ENCODE measurements at regions of chr11 and their contacts with region 1.

Region 1: DNA sequence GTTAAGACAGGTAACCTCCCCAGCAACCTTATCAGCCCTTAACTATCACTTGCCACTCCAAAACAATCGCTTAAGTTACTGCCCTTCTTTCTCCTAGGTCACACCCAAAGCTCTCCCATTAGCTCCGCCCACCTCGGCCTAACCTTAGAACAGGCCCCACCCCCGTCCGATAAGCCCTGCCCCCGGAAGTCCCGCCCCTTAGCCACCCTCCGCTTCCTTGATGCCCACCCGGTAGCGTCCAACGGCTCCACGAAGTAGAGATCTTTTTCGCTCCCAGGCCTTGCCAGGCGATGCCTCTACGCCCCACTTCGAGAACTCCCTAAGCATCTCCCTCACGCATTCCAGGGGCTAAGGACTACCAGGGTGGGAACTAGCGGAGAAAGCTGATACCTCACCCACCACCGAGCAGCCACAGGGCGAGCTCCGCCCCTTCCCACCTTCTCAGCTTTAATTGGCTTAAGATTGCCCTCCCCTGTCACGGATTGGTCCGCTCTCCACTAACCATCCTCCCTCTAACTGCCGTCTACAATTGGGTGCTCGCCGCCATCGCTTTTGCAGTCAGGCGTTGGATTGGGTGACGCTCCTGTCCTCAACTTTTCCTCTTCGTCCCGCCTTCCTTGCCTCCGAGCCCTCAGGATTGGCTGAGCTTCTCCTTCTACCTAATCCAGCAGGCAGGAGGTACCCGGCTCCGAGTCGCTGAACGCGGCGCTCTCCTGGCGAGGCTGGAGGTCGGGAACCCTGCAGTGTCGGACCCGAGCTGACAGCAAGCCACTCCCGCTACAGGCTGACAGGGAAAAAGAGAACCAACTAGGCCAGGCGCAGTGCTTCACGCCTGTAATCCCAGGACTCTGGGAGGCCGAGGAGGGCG is at the start of gene ZBTB3:
- DNase-seq: peak; percentile 99 to 100
- ATAC-seq: peak; percentile 98 to 99
- H3K4me3 ChIP-seq: peak within 1 kb of the TSS; percentile 55
- H3K27ac ChIP-seq: peak within 1 kb of the TSS; percentile 92 to 94
- H3K4me1 ChIP-seq: peaks cover 11% of the 10 kb centered on the region; the same call in 1 of the 3 replicates
- CTCF ChIP-seq: no peak
- EP300 ChIP-seq: no peak
- POLR2A ChIP-seq: peak; percentile 86
- RAD21 ChIP-seq: no peak
- polyA plus RNA-seq, gene ZBTB3: 3.0 and 3.1 TPM in 2 replicates

Region 2: DNA sequence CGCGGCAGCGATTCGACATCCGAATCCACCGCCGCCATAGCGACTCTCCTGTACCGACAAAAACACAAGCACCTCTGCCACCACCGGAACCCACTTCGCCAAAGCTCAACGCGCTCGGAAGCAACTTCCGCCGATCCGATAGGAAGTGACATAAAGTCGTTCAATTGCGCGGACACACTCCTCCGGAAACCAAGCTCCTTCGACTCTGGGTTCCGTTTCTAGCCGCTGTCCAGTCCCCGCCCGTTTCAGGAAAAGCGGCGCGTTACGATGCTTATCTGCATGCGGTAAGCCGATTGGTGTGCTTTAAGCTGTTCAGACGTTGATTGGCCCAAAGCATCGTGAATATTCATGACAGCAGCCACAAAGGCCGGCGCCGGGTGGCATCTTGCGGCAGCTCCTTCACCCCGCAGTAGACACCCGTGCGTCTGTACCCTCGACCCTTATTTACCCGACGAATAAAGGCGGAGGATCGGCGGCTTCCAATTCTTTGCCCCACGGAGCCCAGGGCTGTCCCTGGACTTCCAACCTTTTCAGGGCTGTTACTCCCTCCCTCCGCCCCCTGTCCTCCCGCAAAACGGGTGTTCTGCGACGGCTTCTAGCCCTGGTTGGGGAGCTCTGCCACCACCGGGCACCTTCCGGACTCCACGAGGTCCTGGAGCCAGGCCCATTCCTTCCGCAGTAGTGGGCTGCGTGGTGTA is 162.4 kb before region 1 on chr11 and contains the start of gene TUT1:
- CTCF ChIA-PET with region 1: no interaction called
- POLR2A ChIA-PET with region 1: interaction called, 19 read pairs
- DNase-seq: peak; percentile 96 to 100
- ATAC-seq: peak; percentile 89 to 95
- H3K4me3 ChIP-seq: peak within 1 kb of the TSS; percentile 79
- H3K27ac ChIP-seq: peak within 1 kb of the TSS; percentile 90 to 91
- H3K4me1 ChIP-seq: peaks cover 49% of the 10 kb centered on the region
- CTCF ChIP-seq: no peak
- EP300 ChIP-seq: no peak
- POLR2A ChIP-seq: peak; percentile 87
- RAD21 ChIP-seq: no peak; a peak in 1 of 5 replicates
- polyA plus RNA-seq, gene TUT1: 12.9 and 15.5 TPM in 2 replicates

Region 3: GRCh38 chr11:62678770-62679696 is 74.9 kb before region 1 on chr11 and contains the start of gene UBXN1:
- CTCF ChIA-PET with region 1: no interaction called
- POLR2A ChIA-PET with region 1: interaction called, 10 read pairs
- DNase-seq: peak; percentile 87 to 92
- ATAC-seq: peak; percentile 84 to 86
- H3K4me3 ChIP-seq: peak within 1 kb of the TSS; percentile 67
- H3K27ac ChIP-seq: peak within 1 kb of the TSS; percentile 87 to 92
- H3K4me1 ChIP-seq: peaks cover 24% of the 10 kb centered on the region
- CTCF ChIP-seq: no peak
- EP300 ChIP-seq: no peak
- POLR2A ChIP-seq: peak; percentile 57
- RAD21 ChIP-seq: no peak
- polyA plus RNA-seq, gene UBXN1: 56.8 and 120 TPM in 2 replicates

Region 4: DNA sequence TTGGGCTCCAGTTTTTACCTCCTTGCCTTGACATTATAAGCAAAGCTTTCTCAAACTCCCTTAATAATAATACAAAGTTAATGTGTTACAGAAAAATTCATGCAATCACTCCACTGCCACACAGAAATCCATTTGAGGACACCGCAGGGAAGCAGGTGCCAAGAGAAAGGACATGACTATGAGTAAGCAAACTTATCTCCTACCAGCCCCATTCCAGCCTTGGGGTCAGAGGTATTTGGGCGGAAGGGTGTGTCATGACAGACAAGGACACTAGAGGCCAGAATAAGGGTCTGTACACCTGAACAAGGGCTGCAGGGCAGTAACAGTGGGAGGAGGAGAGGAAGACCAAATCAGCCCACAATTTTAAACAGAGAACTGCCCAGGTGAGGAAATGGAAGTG is 40.6 kb before region 1 on chr11:
- CTCF ChIA-PET with region 1: no interaction called
- POLR2A ChIA-PET with region 1: interaction called, 15 read pairs
- DNase-seq: peak; percentile 52 to 58
- ATAC-seq: peak in 1 of 2 experiments; percentile 15; a peak in 1 of 6 replicates
- H3K4me3 ChIP-seq: no peak overlapping the region
- H3K27ac ChIP-seq: peak overlapping the region; percentile 56 to 80
- H3K4me1 ChIP-seq: peaks cover 48% of the 10 kb centered on the region
- CTCF ChIP-seq: no peak
- EP300 ChIP-seq: no peak
- POLR2A ChIP-seq: no peak
- RAD21 ChIP-seq: no peak

Region 5: GRCh38 chr11:62732801-62733200 is 21.2 kb before region 1 on chr11:
- CTCF ChIA-PET with region 1: interaction called, 8 read pairs
- POLR2A ChIA-PET with region 1: interaction called, 96 read pairs
- DNase-seq: peak in 1 of 2 experiments; percentile 56
- ATAC-seq: peak in 1 of 2 experiments; percentile 31; a peak in 2 of 6 replicates
- H3K4me3 ChIP-seq: no peak overlapping the region
- H3K27ac ChIP-seq: no peak overlapping the region
- H3K4me1 ChIP-seq: peaks cover 15% of the 10 kb centered on the region; the same call in 2 of the 3 replicates
- CTCF ChIP-seq: peak; percentile 41
- EP300 ChIP-seq: no peak
- POLR2A ChIP-seq: no peak
- RAD21 ChIP-seq: peak; percentile 40 to 50; a peak in 4 of 5 replicates

Region 6: DNA sequence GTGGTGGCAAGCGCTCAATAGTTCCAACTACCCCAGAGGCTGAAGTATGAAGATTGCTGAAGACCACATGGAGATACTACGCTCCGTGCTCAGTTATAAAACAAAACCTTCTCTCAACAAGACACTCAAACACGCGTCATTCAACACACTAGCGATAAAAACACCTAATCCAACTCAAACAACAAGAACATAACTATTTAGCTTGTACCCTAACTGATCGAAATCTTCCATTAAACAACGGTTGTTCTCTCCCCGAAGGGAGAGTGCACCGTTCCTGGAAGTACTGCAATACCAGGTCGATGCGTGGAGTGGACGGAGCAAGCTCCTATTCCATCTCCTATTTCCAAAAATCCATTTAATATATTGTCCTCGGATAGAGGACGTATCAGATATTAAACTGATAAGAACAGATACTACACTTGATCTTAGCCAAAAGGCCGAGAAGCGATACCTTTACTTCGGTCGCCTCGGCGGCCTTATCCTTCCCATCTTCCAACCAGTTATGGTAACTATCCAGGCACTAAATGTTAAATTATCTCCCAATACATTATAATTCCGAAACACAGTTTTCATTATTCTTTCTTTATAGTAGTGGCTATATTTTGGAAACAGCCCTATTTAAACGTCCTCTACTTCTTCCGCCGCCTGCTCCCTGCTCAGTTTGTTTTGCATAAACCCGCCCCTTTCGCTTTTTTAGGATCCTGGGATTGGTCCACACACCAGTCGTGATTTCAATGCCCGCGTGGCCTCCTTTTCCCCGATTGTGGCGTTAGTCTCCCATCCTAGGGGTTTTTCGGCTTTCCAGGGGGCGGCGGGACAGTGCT is 87.6 kb after region 1 on chr11:
- CTCF ChIA-PET with region 1: interaction called, 3 read pairs
- POLR2A ChIA-PET with region 1: interaction called, 34 read pairs
- DNase-seq: peak; percentile 97 to 99
- ATAC-seq: peak; percentile 87 to 91
- H3K4me3 ChIP-seq: peak overlapping the region; percentile 89
- H3K27ac ChIP-seq: peak overlapping the region; percentile 94 to 99
- H3K4me1 ChIP-seq: peaks cover 16% of the 10 kb centered on the region
- CTCF ChIP-seq: no peak
- EP300 ChIP-seq: peak in 1 of 2 experiments; percentile 49; a peak in 1 of 5 replicates
- POLR2A ChIP-seq: peak; percentile 95
- RAD21 ChIP-seq: no peak